ENCODE measurements at regions of chrX and their contacts with region 1.

Region 1: GRCh38 chrX:13087322-13088155 is 43.1 kb upstream of the FAM9C start:
- DNase-seq: peak; percentile 79
- H3K4me3 Mint-ChIP-seq: peak overlapping the region; percentile 78
- H3K27ac Mint-ChIP-seq: peak overlapping the region; percentile 98
- H3K4me1 Mint-ChIP-seq: peaks cover 84% of the 10 kb centered on the region
- H3K27me3 Mint-ChIP-seq: no peaks in the 10 kb centered on the region

Region 2: DNA sequence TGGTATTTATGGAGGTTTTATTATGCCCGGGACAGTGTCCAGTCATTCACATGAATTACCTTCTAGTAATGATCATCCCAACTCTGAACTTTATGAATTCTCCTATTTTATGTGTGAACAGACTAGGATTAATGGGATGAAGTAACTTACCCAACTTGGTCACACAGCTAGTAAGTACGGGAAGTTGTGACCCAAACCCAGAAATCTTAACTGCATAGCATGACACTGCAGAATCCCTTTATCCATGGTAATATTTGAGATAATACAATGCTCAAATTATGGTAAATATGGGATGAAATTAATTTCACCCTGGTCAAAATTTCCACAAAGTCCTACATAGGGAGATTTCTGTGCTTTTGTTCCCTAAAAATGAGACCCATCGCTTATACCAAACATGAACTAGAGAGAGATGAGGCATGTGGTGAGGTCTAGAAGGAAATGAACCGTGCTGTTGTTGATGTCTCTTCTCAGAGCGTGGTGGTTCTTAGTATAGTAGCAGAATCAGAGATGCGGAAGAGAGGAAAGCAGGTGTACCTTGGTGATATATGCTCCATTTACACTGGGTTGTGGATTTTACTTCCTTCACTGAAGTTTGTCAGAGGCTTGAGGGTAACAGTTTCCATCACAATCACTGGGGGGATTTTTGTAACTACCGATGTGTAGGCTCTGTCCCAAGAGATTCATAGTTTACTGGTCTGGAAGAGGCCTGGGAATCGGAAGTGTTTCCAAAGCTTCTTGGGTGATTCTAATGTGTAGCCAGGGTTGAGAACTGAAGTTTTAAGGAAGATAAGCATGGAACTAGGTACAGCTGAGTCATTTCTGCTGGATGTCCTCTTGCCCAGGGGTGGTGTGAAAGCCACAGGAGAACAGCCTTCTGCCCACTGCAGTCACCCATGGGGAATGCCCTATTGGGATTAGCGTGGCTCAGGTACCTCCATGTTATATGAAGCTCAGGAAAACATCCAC is 13.0 kb before region 1 on chrX:
- CTCF ChIA-PET with region 1: interaction called, 18 read pairs
- POLR2A ChIA-PET with region 1: no interaction called
- DNase-seq: peak; percentile 26
- H3K4me3 Mint-ChIP-seq: peak overlapping the region; percentile 9
- H3K27ac Mint-ChIP-seq: peak overlapping the region; percentile 93
- H3K4me1 Mint-ChIP-seq: peaks cover 60% of the 10 kb centered on the region
- H3K27me3 Mint-ChIP-seq: no peaks in the 10 kb centered on the region

Region 3: GRCh38 chrX:13110433-13111324 is 23.1 kb after region 1 on chrX:
- CTCF ChIA-PET with region 1: no interaction called
- POLR2A ChIA-PET with region 1: no interaction called
- DNase-seq: no peak
- H3K4me3 Mint-ChIP-seq: no peak overlapping the region
- H3K27ac Mint-ChIP-seq: peak overlapping the region; percentile 13
- H3K4me1 Mint-ChIP-seq: peaks cover 2% of the 10 kb centered on the region
- H3K27me3 Mint-ChIP-seq: no peaks in the 10 kb centered on the region

Region 4: GRCh38 chrX:13487731-13488523 is 400.4 kb after region 1 on chrX:
- CTCF ChIA-PET with region 1: interaction called, 10 read pairs
- POLR2A ChIA-PET with region 1: no interaction called
- DNase-seq: peak; percentile 57
- H3K4me3 Mint-ChIP-seq: no peak overlapping the region
- H3K27ac Mint-ChIP-seq: peak overlapping the region; percentile 79
- H3K4me1 Mint-ChIP-seq: peaks cover 27% of the 10 kb centered on the region
- H3K27me3 Mint-ChIP-seq: no peaks in the 10 kb centered on the region